ENCODE measurements at regions of chr14 and their contacts with region 1.

Region 1: GRCh38 chr14:67526676-67527459 is 6.2 kb upstream of the PLEKHH1 start:
- DNase-seq: peak; percentile 62 to 76 (median 75)
- H3K4me3 ChIP-seq: no peak overlapping the region
- H3K27ac ChIP-seq: no peak overlapping the region
- H3K4me1 ChIP-seq: peaks cover 0 to 8% (median 6%) of the 10 kb centered on the region in 4 experiments
- H3K27me3 ChIP-seq: peaks cover 4 to 84% (median 45%) of the 10 kb centered on the region in 5 experiments

Region 2: GRCh38 chr14:67514650-67515385 is 12.1 kb before region 1 on chr14:
- CTCF ChIA-PET with region 1: interaction called, 33 read pairs
- POLR2A ChIA-PET with region 1: interaction called, 3 read pairs
- DNase-seq: peak; percentile 57 to 81 (median 77)
- H3K4me3 ChIP-seq: peak overlapping the region; percentile 54 to 85 (median 65)
- H3K27ac ChIP-seq: no peak overlapping the region
- H3K4me1 ChIP-seq: peaks cover 0 to 30% (median 20%) of the 10 kb centered on the region in 4 experiments
- H3K27me3 ChIP-seq: peaks cover 0 to 26% (median 17%) of the 10 kb centered on the region in 5 experiments

Region 3: DNA sequence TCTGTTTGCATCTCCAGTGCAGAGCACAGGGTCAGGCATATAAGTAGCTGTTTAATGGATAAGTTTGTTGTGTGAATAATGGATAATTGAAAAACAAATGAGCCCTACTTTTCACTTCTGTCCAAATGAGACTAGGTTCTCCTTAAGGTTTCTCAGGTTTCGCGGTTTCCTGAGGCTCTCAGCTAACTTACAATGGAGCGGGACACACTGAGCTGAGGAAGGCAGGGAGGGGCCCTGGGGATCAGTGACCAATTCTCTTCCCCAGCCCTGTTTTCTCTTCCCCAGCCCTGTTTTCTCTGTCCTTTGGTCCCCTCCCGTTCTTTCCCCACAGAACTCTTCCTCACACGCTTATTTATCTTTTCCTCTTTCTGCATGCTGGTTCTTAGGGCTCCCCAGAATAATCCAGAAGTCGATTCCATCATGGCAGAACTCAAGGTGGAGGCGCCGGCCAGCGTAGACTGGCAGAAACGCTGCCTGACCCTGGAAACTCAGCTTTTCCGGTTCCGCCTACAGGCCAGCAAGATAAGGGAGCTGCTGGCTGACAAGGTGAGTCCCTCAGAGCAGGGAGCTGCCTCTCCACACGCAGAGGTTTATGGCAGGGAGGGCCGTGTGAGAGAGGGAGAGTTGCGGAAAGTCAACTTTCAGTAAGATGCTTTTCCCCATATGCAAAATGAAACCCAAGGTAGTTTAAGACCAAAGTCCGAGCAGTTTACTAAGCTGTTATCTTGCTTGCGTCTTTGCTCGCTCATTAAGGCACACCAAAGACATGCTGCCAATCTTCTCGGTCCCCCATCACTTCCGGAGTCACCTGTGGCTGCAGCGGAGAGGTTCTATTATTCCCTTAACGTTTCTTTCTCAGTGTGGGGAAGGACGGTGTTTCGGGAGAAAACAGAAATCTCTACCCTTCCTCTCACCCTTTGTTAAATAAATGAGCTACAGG is 14.8 kb after region 1 on chr14:
- CTCF ChIA-PET with region 1: interaction called, 51 read pairs
- POLR2A ChIA-PET with region 1: no interaction called
- DNase-seq: peak; percentile 8 to 18 (median 18)
- H3K4me3 ChIP-seq: peak overlapping the region in 3 of 7 experiments; percentile 11 to 69 (median 40)
- H3K27ac ChIP-seq: no peak overlapping the region
- H3K4me1 ChIP-seq: peaks cover 0 to 8% (median 4%) of the 10 kb centered on the region in 4 experiments
- H3K27me3 ChIP-seq: peaks cover 0 to 30% (median 6%) of the 10 kb centered on the region in 5 experiments

Region 4: GRCh38 chr14:67551940-67552339 is 25.1 kb after region 1 on chr14:
- CTCF ChIA-PET with region 1: interaction called, 26 read pairs
- POLR2A ChIA-PET with region 1: no interaction called
- DNase-seq: no peak
- H3K4me3 ChIP-seq: no peak overlapping the region
- H3K27ac ChIP-seq: no peak overlapping the region
- H3K4me1 ChIP-seq: peaks cover 0 to 11% (median 4%) of the 10 kb centered on the region in 4 experiments
- H3K27me3 ChIP-seq: peaks cover 0 to 8% (median 0%) of the 10 kb centered on the region in 5 experiments

Region 5: GRCh38 chr14:67557126-67557525 is 30.3 kb after region 1 on chr14:
- CTCF ChIA-PET with region 1: interaction called, 26 read pairs
- POLR2A ChIA-PET with region 1: no interaction called
- DNase-seq: no peak
- H3K4me3 ChIP-seq: no peak overlapping the region
- H3K27ac ChIP-seq: no peak overlapping the region
- H3K4me1 ChIP-seq: peaks cover 0 to 11% (median 4%) of the 10 kb centered on the region in 4 experiments
- H3K27me3 ChIP-seq: peaks cover 0 to 4% (median 0%) of the 10 kb centered on the region in 5 experiments

Region 6: GRCh38 chr14:67787673-67788072 is 260.8 kb after region 1 on chr14:
- CTCF ChIA-PET with region 1: no interaction called
- POLR2A ChIA-PET with region 1: no interaction called
- DNase-seq: no peak
- H3K4me3 ChIP-seq: no peak overlapping the region
- H3K27ac ChIP-seq: no peak overlapping the region
- H3K4me1 ChIP-seq: no peaks in the 10 kb centered on the region
- H3K27me3 ChIP-seq: no peaks in the 10 kb centered on the region